Activated CD4-positive, alpha-beta T cell treated with anti-CD3 and anti-CD28 coated beads, Interleukin-2, amount 10 ng/mL, durations not matched to agents 24 days and 14 days (primary cell): ENCODE measurements at regions of chr10 and their contacts with region 1.

Region 1: DNA sequence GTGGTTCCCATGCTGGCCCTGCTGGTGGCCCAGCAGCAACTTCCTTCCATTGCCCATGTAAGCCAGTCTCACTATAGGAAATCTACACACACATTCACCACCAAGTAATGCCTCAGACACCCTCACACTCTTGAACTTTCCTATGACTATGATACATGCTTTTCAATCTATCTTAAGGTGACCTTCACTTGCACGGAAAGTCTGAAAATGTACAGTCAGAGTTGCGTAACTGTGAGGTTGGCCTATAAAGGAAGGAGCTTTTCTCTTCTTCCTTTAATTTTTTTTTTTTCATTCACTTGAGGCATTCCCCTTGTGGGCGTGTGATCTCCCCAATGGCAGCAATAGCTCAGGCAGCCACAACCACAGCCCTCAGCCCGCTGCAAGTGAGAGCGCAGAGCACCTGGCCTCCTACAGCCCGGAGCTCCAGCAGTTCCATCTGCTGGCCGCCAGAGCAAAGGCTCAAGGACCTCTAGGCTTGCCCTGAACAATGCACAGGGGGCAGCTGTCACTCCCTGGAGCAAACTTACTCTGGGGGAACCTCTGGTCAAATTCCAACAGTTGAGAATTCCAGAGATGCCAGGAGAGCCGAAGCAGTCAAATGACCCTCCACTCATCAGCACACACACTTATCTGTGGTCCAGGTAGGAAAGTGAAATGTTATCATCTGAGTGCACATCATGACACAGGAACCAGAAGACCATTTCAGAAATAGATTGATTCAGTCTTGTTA is 123.1 kb upstream of the ADO start:
- DNase-seq: peak; percentile 92
- H3K4me3 Mint-ChIP-seq: peak overlapping the region; percentile 31
- H3K27ac Mint-ChIP-seq: peak overlapping the region; percentile 72
- H3K4me1 Mint-ChIP-seq: peaks cover 48% of the 10 kb centered on the region
- H3K27me3 Mint-ChIP-seq: peaks cover 1% of the 10 kb centered on the region

Region 2: GRCh38 chr10:62647375-62648092 is 33.8 kb before region 1 on chr10:
- intact Hi-C with region 1: loop called (anchors 2 kb)
- DNase-seq: no peak
- H3K4me3 Mint-ChIP-seq: peak overlapping the region; percentile 17
- H3K27ac Mint-ChIP-seq: peak overlapping the region; percentile 38
- H3K4me1 Mint-ChIP-seq: peaks cover 48% of the 10 kb centered on the region
- H3K27me3 Mint-ChIP-seq: no peaks in the 10 kb centered on the region

Region 3: DNA sequence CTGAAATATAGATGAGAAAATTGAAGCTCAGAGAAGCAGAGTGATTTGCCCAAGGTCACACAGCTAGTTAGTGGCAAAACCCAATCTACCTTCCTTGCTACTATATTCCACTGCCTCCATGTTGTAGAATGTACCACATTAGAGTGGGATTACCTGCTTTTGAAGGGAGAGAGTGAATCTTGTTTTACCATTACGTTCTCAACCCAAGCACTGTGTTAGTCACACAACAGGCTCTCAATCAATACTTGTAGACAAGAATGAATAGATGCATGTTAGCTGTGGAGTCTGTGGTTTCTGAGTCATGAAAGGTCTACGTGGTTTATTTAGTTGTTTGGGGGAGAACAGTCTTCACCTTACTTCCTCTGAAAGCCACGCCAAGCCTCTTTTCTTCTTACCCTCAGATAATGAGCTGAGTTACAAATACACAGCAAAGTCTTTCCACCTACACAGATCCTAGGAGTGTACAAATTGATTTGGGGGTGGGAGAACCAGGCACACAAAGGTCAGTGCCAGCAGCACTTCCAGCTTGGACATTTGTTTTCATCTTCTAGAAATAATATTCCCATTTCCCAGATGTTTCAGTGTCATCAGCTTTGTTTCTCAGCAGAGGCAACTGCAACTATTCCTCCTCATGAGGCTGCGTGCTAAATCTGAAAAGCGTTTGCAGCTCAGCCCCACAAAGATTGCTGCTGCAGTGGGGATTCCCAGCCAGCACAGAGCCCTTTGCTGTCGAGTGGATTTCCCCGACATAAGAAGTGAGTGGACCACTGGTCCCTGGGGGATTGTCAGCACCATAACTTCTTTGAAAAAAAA is 51.7 kb after region 1 on chr10:
- intact Hi-C with region 1: loop called (anchors 1 kb)
- DNase-seq: peak; percentile 91
- H3K4me3 Mint-ChIP-seq: no peak overlapping the region
- H3K27ac Mint-ChIP-seq: no peak overlapping the region
- H3K4me1 Mint-ChIP-seq: peaks cover 43% of the 10 kb centered on the region
- H3K27me3 Mint-ChIP-seq: peaks cover 1% of the 10 kb centered on the region

Region 4: DNA sequence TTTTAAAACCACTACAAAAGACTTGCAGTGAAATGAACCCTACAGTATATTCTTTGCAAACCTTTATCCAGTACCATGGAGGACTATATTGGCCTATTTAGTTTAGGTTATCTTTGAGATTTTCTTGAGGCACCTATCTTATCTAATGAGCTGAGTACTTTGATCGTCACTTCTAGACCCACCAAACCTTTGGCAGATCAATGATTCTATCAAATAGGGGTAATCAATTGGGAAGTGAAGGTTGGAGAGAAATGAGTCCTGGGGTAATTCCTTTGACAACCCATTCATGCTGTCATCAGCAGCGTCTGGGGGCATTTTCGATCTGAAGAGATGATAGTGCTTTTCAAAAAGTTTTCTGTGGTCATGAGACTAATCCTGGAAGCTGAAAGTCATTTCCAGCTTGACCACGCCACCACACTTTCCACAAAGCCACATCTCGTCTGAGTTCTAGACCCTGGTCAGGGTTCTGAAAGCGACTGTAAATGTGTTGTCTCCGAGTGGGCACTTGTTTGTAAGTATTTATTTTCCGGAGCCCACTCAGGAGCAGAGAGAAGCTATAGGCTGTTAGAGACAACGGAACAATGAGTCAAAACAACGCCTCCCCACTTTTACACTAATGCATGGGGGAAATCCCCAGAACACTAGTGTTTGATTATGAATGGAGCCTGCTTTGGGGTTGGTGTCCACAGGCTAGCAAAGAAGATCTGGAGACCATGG is 129.9 kb after region 1 on chr10:
- intact Hi-C with region 1: loop called (anchors 1 kb)
- DNase-seq: peak; percentile 90
- H3K4me3 Mint-ChIP-seq: peak overlapping the region; percentile 97
- H3K27ac Mint-ChIP-seq: peak overlapping the region; percentile 100
- H3K4me1 Mint-ChIP-seq: peaks cover 67% of the 10 kb centered on the region
- H3K27me3 Mint-ChIP-seq: peaks cover 1% of the 10 kb centered on the region

Region 5: GRCh38 chr10:62992145-62992721 is 310.9 kb after region 1 on chr10:
- intact Hi-C with region 1: loop called (anchors 1 kb)
- DNase-seq: no peak
- H3K4me3 Mint-ChIP-seq: peak overlapping the region; percentile 62
- H3K27ac Mint-ChIP-seq: peak overlapping the region; percentile 91
- H3K4me1 Mint-ChIP-seq: peaks cover 54% of the 10 kb centered on the region
- H3K27me3 Mint-ChIP-seq: no peaks in the 10 kb centered on the region